ENCODE measurements at regions of chr10 and their contacts with region 1.

Region 1: DNA sequence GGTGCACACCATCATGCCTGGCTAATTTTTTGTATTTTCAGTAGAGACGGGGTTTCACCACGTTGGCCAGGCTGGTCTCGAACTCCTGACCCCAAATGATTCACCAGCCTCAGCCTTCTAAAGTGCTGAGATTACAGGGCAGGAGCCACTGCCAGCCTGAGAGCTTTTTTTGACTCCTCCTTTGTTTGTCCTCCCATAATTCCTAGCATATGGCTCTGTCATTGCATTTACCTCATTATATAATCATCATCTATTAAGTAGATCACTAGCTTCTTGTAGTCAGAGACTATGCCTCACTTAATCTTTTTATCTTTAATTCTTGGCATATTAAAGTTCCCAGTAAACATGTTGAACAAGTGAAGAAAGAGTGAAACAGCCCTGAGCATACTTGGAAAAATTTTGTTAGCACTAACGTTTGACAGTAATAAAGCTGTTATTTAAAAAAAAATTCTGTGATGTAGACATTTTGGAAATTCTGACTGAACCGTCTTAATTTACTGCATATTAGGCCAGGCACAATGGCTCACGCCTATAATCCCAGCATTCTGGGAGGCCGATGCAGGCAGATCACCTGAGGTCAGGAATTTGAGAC is 82.0 kb downstream of the CPEB3 start:
- DNase-seq: no peak
- H3K4me3 ChIP-seq: no peak overlapping the region
- H3K27me3 ChIP-seq: no peaks in the 10 kb centered on the region
- CTCF ChIP-seq: no peak

Region 2: DNA sequence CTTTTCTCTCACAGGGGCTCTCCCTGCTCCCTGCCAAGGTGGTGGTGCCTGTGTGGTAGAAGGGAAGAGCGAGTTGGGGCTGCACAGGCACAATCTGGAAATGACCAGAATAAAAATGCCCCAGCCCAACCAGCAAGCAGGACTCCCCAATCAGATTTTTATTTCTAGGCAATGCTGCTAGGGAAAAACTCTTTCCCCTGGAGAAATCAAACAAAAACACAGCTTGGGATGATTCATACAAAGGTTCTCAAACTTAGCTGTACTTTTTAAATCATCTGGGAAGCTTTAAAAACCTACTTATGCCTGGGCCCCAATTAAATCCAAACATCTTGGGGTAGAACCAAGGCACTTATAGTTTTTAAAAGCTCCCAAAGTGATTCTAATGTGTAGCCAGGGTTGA is 1594.2 kb before region 1 on chr10:
- CTCF ChIA-PET with region 1: no interaction called
- POLR2A ChIA-PET with region 1: interaction called, 11 read pairs
- DNase-seq: no peak
- H3K4me3 ChIP-seq: no peak overlapping the region
- H3K27me3 ChIP-seq: peaks cover 3% of the 10 kb centered on the region
- CTCF ChIP-seq: no peak

Region 3: GRCh38 chr10:92298487-92298886 is 89.7 kb after region 1 on chr10:
- CTCF ChIA-PET with region 1: no interaction called
- POLR2A ChIA-PET with region 1: no interaction called
- DNase-seq: no peak
- H3K4me3 ChIP-seq: no peak overlapping the region
- H3K27me3 ChIP-seq: no peaks in the 10 kb centered on the region
- CTCF ChIP-seq: no peak

Region 4: DNA sequence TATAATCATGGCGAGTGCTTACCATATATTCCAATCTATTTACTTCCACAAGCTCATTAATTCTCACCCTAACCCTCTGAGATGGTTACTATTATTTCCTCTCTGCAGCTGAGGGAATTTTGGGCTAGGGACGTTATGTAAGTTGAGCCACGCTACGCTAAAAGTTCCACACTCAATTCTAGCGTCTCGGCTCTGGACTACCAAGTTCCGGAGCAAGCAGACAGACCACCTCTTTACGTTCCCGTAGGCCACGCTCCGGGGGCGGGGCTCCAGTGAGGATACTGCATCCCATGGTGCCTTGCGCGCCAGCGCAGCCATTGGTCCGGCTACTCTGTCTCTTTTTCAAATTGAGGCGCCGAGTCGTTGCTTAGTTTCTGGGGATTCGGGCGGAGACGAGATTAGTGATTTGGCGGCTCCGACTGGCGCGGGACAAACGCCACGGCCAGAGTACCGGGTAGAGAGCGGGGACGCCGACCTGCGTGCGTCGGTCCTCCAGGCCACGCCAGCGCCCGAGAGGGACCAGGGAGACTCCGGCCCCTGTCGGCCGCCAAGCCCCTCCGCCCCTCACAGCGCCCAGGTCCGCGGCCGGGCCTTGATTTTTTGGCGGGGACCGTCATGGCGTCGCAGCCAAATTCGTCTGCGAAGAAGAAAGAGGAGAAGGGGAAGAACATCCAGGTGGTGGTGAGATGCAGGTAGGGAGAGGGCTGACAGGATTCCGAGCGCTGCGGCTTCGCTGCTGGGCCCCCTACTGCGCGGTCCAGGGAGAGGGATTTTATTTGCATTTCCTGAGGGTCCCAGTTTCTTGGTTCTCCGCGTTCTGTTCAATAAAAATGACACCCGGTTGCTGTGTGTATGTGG is 384.2 kb after region 1 on chr10 and contains the start of gene KIF11:
- CTCF ChIA-PET with region 1: no interaction called
- POLR2A ChIA-PET with region 1: no interaction called
- DNase-seq: peak; percentile 85
- H3K4me3 ChIP-seq: peak within 1 kb of the TSS; percentile 86
- H3K27me3 ChIP-seq: no peaks in the 10 kb centered on the region
- CTCF ChIP-seq: peak; percentile 18; the same call in 1 of the 2 replicates
- polyA plus RNA-seq, gene KIF11: 4.3 and 9.2 TPM in 2 replicates